ENCODE measurements at regions of chr1 and their contacts with region 1.

Region 1: GRCh38 chr1:212990276-212990675 is 25.4 kb downstream of the ANGEL2 start:
- DNase-seq: no peak
- H3K4me3 ChIP-seq: no peak overlapping the region
- H3K27ac ChIP-seq: no peak overlapping the region
- H3K4me1 ChIP-seq: peaks cover 0 to 13% of the 10 kb centered on the region in 2 donors
- H3K27me3 ChIP-seq: no peaks in the 10 kb centered on the region
- CTCF ChIP-seq: no peak
- POLR2A ChIP-seq: no peak

Region 2: GRCh38 chr1:212738330-212738729 is 251.9 kb before region 1 on chr1:
- intact Hi-C with region 1: loop called in 1 of 2 experiments (anchors 5 kb)
- DNase-seq: no peak
- H3K4me3 ChIP-seq: no peak overlapping the region
- H3K27ac ChIP-seq: no peak overlapping the region
- H3K4me1 ChIP-seq: no peaks in the 10 kb centered on the region
- H3K27me3 ChIP-seq: no peaks in the 10 kb centered on the region
- CTCF ChIP-seq: no peak
- POLR2A ChIP-seq: no peak

Region 3: DNA sequence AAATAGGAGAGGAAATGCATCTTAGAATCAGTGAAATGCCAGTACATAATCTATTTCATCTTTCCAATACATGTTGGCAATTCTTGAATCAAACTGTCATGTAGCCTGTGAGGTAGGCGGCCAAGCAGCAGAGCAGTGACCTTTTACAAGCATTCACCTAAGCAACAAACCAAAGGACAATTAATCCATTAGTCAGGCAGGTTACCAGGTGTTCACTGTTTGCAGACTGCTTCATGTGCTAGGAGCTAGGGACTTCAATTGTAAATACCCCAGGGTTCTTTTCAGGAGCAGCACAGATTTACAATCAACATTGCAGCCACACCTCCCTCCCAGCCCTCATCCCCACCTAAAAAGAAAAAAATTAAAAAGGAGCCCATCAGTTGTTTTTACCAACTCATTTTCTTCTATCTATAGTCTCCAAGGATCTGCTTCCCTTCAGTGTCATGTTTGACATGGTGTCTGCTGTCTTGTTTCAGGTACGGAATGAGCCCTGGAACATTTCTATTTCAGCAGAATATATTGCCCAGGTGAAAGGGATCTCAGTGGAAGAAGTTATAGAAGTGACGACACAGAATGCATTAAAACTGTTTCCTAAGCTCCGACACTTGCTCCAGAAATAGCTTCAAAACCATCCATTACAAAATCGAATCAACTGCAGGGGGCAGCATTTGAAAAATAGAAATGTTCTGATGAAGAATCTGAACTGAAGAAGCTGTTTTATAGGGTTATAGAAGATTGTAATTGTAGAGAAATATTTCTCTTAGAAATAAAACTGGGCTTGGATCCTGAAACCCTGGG is 175.5 kb before region 1 on chr1:
- intact Hi-C with region 1: loop called in 1 of 2 experiments (anchors 10 kb)
- DNase-seq: peak in 2 of 7 donors; percentile 10 to 44
- H3K4me3 ChIP-seq: no peak overlapping the region
- H3K27ac ChIP-seq: no peak overlapping the region
- H3K4me1 ChIP-seq: no peaks in the 10 kb centered on the region
- H3K27me3 ChIP-seq: no peaks in the 10 kb centered on the region
- CTCF ChIP-seq: peak; percentile 22 to 55 (median 26)
- POLR2A ChIP-seq: no peak